SK-N-SH (cell line): ENCODE measurements at regions of chr19 and their contacts with region 1.

Region 1: DNA sequence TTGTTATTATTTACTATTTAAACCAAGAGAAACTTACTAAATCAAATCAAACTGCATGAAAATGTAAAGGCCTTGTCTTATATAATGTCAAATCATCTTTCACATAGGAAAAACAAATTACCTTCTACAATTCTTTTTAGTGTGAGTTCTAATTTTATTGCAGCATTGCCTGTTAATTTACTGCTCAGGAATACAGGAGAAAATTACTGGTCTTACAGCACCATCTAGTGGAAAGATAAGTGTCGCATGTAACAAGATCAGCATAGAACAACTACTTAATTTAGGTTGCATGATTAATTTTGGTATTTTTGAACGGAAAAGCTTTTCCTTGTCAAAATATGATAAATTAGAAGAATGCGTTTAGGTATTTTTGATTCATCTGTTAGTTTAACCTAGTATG is 502.7 kb downstream of the UQCRFS1 start:
- DNase-seq: peak; percentile 24
- H3K4me3 ChIP-seq: no peak overlapping the region
- H3K27ac ChIP-seq: no peak overlapping the region
- H3K4me1 ChIP-seq: 0 out of 4 replicates have a peak, but pooled peaks cover 0 to 4% of the 10 kb centered on the region in 2 experiments
- H3K27me3 ChIP-seq: no peaks in the 10 kb centered on the region
- CTCF ChIP-seq: peak; percentile 84
- EP300 ChIP-seq: no peak
- RAD21 ChIP-seq: peak; percentile 80

Region 2: GRCh38 chr19:28466107-28467045 is 243.9 kb before region 1 on chr19:
- CTCF ChIA-PET with region 1: interaction called, 10 read pairs
- POLR2A ChIA-PET with region 1: no interaction called
- DNase-seq: peak; percentile 57
- H3K4me3 ChIP-seq: no peak overlapping the region; a peak in 1 of 4 replicates
- H3K27ac ChIP-seq: no peak overlapping the region
- H3K4me1 ChIP-seq: no peaks in the 10 kb centered on the region; a peak in 1 of 4 replicates
- H3K27me3 ChIP-seq: no peaks in the 10 kb centered on the region
- CTCF ChIP-seq: peak; percentile 93
- EP300 ChIP-seq: no peak
- RAD21 ChIP-seq: peak; percentile 66

Region 3: GRCh38 chr19:28530406-28531035 is 179.8 kb before region 1 on chr19:
- CTCF ChIA-PET with region 1: no interaction called
- POLR2A ChIA-PET with region 1: no interaction called
- DNase-seq: no peak
- H3K4me3 ChIP-seq: no peak overlapping the region
- H3K27ac ChIP-seq: no peak overlapping the region
- H3K4me1 ChIP-seq: no peaks in the 10 kb centered on the region
- H3K27me3 ChIP-seq: no peaks in the 10 kb centered on the region
- CTCF ChIP-seq: no peak
- EP300 ChIP-seq: no peak
- RAD21 ChIP-seq: no peak

Region 4: DNA sequence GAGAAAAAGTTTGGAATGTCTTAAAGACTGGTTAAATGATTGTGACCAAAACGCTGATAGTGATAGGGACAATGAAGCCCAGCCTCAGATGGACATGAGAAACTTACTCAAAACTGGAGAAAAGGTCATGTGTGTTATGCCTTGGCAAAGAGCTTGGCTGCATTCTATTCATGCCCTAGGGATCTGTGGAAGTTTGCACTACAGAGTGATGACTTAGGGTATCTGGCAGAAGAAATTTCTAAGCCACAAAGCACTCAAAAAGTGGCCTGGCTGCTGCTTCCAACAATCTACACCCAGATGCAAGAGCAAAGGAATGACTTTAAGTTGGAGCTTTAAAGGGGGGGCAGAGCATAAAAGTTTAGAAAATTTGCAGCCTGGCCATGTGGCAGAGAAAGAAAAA is 18.6 kb before region 1 on chr19:
- CTCF ChIA-PET with region 1: interaction called, 11 read pairs
- POLR2A ChIA-PET with region 1: no interaction called
- DNase-seq: no peak
- H3K4me3 ChIP-seq: no peak overlapping the region
- H3K27ac ChIP-seq: no peak overlapping the region
- H3K4me1 ChIP-seq: no peaks in the 10 kb centered on the region
- H3K27me3 ChIP-seq: no peaks in the 10 kb centered on the region
- CTCF ChIP-seq: no peak
- EP300 ChIP-seq: no peak
- RAD21 ChIP-seq: no peak

Region 5: GRCh38 chr19:28737021-28737895 is 27.0 kb after region 1 on chr19:
- CTCF ChIA-PET with region 1: interaction called, 10 read pairs
- POLR2A ChIA-PET with region 1: no interaction called
- DNase-seq: no peak
- H3K4me3 ChIP-seq: peak overlapping the region in 1 of 2 experiments; percentile 39; a peak in 1 of 4 replicates
- H3K27ac ChIP-seq: no peak overlapping the region
- H3K4me1 ChIP-seq: no peaks in the 10 kb centered on the region
- H3K27me3 ChIP-seq: no peaks in the 10 kb centered on the region
- CTCF ChIP-seq: peak; percentile 83
- EP300 ChIP-seq: no peak
- RAD21 ChIP-seq: peak; percentile 48

Region 6: DNA sequence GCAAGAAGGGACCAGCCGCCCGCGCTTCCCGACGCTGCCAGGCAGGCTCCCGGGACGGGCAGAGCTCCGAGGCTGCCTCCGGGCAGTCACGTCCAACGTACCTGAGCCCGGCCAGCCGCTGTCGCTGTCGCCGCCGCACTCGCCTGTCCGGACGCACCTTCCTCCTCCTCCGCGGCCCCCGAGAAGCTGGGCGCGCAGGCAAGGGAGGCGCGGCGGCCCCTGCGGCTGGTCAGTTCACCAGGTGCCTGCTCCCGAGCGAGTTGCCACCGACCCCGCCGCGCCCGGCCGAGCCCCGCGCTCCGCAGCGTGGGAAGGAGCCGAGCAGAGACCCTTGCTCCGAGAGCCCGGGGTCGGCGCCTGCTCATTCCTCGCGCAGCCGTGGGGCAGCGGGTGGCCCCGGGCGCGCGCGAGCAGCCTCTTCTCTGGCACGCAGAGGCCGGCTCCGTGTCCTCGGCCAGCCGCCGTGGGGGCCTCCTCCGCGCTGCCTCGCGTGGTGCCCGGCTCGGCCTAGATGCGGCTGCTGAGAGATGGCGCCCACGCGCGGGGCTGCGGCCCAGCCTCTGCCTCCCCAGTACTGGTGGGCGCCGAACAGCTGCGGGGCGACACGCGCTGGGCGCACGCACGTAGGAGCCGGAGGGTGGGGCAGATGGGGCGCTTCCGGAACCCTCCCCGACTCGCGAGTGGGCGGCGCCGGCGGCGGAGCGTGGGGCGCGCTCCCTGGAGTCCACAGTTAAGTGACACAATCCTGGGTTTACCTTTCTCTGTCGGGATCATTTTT is 83.3 kb after region 1 on chr19:
- CTCF ChIA-PET with region 1: no interaction called
- POLR2A ChIA-PET with region 1: no interaction called
- DNase-seq: no peak
- H3K4me3 ChIP-seq: no peak overlapping the region
- H3K27ac ChIP-seq: no peak overlapping the region
- H3K4me1 ChIP-seq: no peaks in the 10 kb centered on the region
- H3K27me3 ChIP-seq: peaks cover 10% of the 10 kb centered on the region; the same call in 1 of the 2 replicates
- CTCF ChIP-seq: no peak
- EP300 ChIP-seq: no peak
- RAD21 ChIP-seq: no peak